Caco-2 (cell line): ENCODE measurements at regions of chr19 and their contacts with region 1.

Region 1: GRCh38 chr19:51338563-51339312 is 3.2 kb downstream of the VSIG10L start:
- DNase-seq: peak; percentile 89 to 92
- H3K4me3 ChIP-seq: peak overlapping the region; percentile 78
- H3K4me3 Mint-ChIP-seq: peak overlapping the region; percentile 86
- H3K27ac Mint-ChIP-seq: peak overlapping the region; percentile 90
- H3K4me1 ChIP-seq: peaks cover 26% of the 10 kb centered on the region
- H3K4me1 Mint-ChIP-seq: peaks cover 25% of the 10 kb centered on the region
- H3K27me3 ChIP-seq: no peaks in the 10 kb centered on the region
- H3K27me3 Mint-ChIP-seq: no peaks in the 10 kb centered on the region
- CTCF ChIP-seq: peak; percentile 92 to 94

Region 2: DNA sequence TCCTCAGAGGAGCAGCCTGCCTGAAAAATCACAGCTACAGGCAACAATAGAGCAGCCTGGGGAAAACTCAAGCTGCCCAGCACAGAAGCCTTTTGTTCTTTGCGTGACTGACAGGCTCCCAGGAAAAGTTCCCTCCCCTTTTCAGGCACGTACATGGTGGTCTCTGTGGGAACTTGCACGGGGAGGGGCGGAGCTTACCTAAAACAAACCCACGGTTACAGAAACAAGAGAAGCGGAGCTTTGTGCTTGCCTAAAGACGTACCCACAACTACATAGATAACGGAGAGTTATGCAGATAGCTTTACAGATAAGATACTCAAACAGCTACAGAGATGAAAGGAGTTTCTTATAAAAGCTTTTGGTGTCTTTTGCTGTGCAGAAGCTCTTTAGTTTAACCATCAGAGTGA is 16.0 kb after region 1 on chr19:
- CTCF ChIA-PET with region 1: interaction called, 46 read pairs
- POLR2A ChIA-PET with region 1: interaction called, 41 read pairs
- intact Hi-C with region 1: loop called (anchors 1 kb)
- DNase-seq: peak; percentile 91 to 96
- H3K4me3 ChIP-seq: no peak overlapping the region
- H3K4me3 Mint-ChIP-seq: peak overlapping the region; percentile 90
- H3K27ac Mint-ChIP-seq: peak overlapping the region; percentile 92
- H3K4me1 ChIP-seq: peaks cover 41% of the 10 kb centered on the region
- H3K4me1 Mint-ChIP-seq: peaks cover 46% of the 10 kb centered on the region
- H3K27me3 ChIP-seq: no peaks in the 10 kb centered on the region
- H3K27me3 Mint-ChIP-seq: no peaks in the 10 kb centered on the region
- CTCF ChIP-seq: no peak

Region 3: GRCh38 chr19:51367565-51368365 is 29.0 kb after region 1 on chr19:
- CTCF ChIA-PET with region 1: interaction called, 30 read pairs
- POLR2A ChIA-PET with region 1: interaction called, 67 read pairs
- intact Hi-C with region 1: loop called (anchors 1 kb)
- DNase-seq: peak; percentile 99 to 100
- H3K4me3 ChIP-seq: peak overlapping the region; percentile 77
- H3K4me3 Mint-ChIP-seq: peak overlapping the region; percentile 94
- H3K27ac Mint-ChIP-seq: peak overlapping the region; percentile 100
- H3K4me1 ChIP-seq: peaks cover 32% of the 10 kb centered on the region
- H3K4me1 Mint-ChIP-seq: peaks cover 20% of the 10 kb centered on the region
- H3K27me3 ChIP-seq: no peaks in the 10 kb centered on the region
- H3K27me3 Mint-ChIP-seq: no peaks in the 10 kb centered on the region
- CTCF ChIP-seq: no peak

Region 4: GRCh38 chr19:51393959-51394836 is 55.5 kb after region 1 on chr19:
- CTCF ChIA-PET with region 1: interaction called, 5 read pairs
- POLR2A ChIA-PET with region 1: interaction called, 22 read pairs
- intact Hi-C with region 1: loop called (anchors 1 kb)
- DNase-seq: peak; percentile 97 to 98
- H3K4me3 ChIP-seq: peak overlapping the region; percentile 74
- H3K4me3 Mint-ChIP-seq: peak overlapping the region; percentile 93
- H3K27ac Mint-ChIP-seq: peak overlapping the region; percentile 87
- H3K4me1 ChIP-seq: 0 out of 2 replicates have a peak, but pooled peaks cover 3% of the 10 kb centered on the region
- H3K4me1 Mint-ChIP-seq: peaks cover 6% of the 10 kb centered on the region
- H3K27me3 ChIP-seq: no peaks in the 10 kb centered on the region
- H3K27me3 Mint-ChIP-seq: no peaks in the 10 kb centered on the region
- CTCF ChIP-seq: peak in 1 of 2 experiments; percentile 1

Region 5: DNA sequence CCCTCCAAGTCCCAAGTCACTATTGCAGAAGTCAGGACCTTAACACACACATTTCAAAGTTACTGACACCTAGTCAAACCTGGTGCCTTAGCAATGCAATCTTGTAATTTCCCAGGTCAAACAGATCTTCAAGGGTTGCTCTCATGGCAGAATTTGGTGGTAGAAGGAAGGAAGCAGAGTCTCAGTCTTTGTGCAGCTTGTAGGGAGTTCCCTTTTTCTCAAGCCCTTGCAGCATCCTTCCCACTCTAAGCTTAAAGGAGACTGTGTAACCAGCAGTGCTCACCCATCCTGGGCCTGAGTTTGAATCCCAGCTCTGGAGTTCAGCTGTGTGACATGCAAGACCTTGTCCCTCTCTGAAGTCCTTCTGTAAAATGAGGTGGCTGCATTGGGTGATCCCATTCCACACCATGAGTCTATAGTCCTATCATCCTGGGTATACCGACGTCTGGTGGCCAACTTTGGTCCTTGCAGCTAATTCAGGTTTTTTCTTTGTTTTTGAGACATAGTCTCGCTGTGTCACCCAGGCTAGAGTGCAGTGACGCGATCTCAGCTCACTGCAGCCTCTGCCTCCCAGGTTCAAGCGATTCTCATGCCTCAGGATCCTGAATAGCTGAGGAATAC is 68.9 kb after region 1 on chr19:
- CTCF ChIA-PET with region 1: interaction called, 20 read pairs
- POLR2A ChIA-PET with region 1: no interaction called
- intact Hi-C with region 1: loop called (anchors 1 kb)
- DNase-seq: peak; percentile 55 to 67
- H3K4me3 ChIP-seq: no peak overlapping the region
- H3K4me3 Mint-ChIP-seq: no peak overlapping the region
- H3K27ac Mint-ChIP-seq: no peak overlapping the region
- H3K4me1 ChIP-seq: no peaks in the 10 kb centered on the region
- H3K4me1 Mint-ChIP-seq: no peaks in the 10 kb centered on the region
- H3K27me3 ChIP-seq: no peaks in the 10 kb centered on the region
- H3K27me3 Mint-ChIP-seq: peaks cover 3% of the 10 kb centered on the region
- CTCF ChIP-seq: peak; percentile 71 to 73